Calu3 (cell line): ENCODE measurements at regions of chr13 and their contacts with region 1.

Region 1: GRCh38 chr13:110915057-110915873 is at the start of gene ANKRD10:
- DNase-seq: peak; percentile 94
- H3K4me3 Mint-ChIP-seq: peak within 1 kb of the TSS; percentile 65
- H3K27ac Mint-ChIP-seq: peak within 1 kb of the TSS; percentile 89
- H3K4me1 Mint-ChIP-seq: no peaks in the 10 kb centered on the region
- H3K27me3 Mint-ChIP-seq: no peaks in the 10 kb centered on the region
- CTCF ChIP-seq: peak; percentile 36
- total RNA-seq, gene ANKRD10: 109 and 120 TPM in 2 replicates

Region 2: DNA sequence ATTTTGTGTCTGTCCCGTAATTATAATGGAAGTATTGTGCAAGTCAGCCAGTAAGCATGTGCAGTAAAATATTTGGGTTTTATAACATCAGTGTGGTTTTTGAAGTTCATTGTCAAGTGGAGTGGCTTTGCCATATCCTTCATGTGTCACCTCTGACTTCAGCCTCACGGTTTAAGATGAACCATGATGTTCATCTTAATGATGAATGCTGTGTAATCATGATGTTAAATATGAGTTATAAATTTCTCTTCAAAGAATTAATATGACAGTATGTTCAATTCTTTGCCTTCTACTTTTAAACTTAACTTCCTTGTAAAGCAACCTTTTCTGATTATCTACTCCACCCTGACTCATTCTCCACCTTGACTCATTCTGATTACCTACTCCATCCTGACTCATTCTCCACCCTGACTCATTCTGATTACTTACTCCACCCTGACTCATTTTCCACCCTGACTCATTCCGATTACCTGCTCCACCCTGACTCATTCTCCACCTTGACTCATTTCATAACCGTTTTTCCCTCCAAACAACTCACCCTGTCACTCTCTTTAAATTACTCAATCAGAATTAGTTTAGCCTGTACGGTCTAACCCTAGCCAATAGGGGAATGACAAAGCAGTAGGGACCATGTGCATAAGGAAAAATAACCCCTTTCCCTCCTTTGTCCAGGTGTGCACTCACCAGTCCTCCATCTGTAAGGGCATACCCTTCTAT is 49.9 kb after region 1 on chr13:
- CTCF ChIA-PET with region 1: no interaction called
- intact Hi-C with region 1: loop called (anchors 2 kb)
- DNase-seq: peak; percentile 26
- H3K4me3 Mint-ChIP-seq: peak overlapping the region; percentile 45
- H3K27ac Mint-ChIP-seq: peak overlapping the region; percentile 98
- H3K4me1 Mint-ChIP-seq: no peaks in the 10 kb centered on the region
- H3K27me3 Mint-ChIP-seq: no peaks in the 10 kb centered on the region
- CTCF ChIP-seq: no peak

Region 3: DNA sequence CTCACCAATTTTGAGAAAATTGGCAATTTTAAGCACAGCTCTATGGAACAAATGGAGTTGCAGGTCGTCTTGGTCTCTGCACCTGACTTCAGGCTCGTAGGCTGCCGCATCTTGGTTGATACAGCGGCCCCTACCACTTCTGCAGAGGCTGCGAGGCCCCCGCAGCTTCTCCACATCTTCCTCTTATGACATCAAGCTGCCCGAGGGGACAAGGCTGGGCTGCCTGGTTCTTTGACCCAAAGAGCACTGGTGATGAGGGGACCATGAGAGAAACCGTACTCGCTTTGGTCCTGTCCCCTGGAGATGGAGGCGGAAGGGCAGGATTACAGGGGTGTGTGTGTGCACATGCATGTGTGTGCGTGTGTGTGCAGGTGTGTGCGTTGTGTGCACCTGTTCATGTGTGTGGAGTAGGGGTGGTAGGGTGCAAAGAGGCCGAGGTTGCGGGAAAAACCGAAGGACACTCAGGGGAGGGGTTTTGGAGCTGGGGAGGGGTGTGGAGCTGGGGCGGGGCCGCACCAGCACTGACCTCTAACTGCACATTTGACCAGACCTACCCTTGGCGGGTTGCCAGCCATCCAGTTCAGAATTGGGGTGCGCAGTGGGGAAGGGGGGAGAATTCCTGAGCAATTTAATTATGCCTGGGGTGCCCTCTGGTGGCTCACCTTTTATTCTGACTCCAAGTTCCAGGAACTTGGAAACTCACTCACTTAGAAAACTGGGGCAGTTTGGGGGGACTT is 134.7 kb after region 1 on chr13:
- CTCF ChIA-PET with region 1: no interaction called
- intact Hi-C with region 1: loop called (anchors 10 kb)
- DNase-seq: peak; percentile 20
- H3K4me3 Mint-ChIP-seq: no peak overlapping the region
- H3K27ac Mint-ChIP-seq: no peak overlapping the region
- H3K4me1 Mint-ChIP-seq: no peaks in the 10 kb centered on the region
- H3K27me3 Mint-ChIP-seq: no peaks in the 10 kb centered on the region
- CTCF ChIP-seq: no peak